AG04449 (cell line): ENCODE measurements at regions of chr7 and their contacts with region 1.

Region 1: DNA sequence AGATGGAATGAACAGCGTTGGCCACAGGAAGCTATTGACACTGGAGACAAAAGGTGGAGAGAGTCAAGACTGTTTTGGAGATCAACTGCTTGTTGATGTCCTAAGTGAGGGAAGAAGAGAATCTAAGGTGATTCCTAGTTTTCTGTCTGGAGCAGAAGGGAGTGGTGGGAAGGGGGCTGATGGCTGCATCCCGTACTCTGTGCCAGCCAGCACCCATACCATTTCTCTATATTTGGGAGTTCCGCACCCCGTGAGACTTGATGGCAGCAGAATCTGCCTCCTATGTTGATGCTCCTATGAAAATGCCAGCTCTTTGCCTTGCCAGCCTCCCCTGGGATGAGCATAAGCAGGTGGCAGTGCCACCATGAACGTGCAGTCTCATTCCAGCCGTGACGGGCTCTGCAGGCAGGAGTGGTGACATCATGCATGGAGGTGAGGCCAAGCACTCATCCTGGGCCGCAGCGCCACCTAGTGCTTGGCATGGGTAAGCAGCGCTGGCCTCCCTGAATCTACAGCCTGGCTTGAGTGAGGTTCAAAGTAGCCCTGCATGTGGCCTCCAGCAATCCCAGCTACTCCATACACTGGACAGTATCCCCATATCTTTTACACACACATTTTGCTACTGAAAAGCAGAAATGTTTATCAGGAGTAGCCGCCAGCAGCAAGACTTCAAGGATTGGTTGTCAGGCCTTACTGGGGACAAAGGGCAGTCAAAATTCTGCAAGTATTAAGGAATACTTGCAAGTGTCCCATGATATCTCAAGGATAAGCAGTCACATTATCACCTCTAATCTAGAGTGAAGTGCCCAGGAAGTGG is 43.0 kb downstream of the PODXL start:
- DNase-seq: no peak
- H3K4me3 ChIP-seq: no peak overlapping the region
- CTCF ChIP-seq: peak; percentile 99

Region 2: GRCh38 chr7:131482800-131483199 is 30.7 kb before region 1 on chr7:
- CTCF ChIA-PET with region 1: interaction called, 114 read pairs
- POLR2A ChIA-PET with region 1: no interaction called
- DNase-seq: no peak
- H3K4me3 ChIP-seq: no peak overlapping the region
- CTCF ChIP-seq: no peak

Region 3: DNA sequence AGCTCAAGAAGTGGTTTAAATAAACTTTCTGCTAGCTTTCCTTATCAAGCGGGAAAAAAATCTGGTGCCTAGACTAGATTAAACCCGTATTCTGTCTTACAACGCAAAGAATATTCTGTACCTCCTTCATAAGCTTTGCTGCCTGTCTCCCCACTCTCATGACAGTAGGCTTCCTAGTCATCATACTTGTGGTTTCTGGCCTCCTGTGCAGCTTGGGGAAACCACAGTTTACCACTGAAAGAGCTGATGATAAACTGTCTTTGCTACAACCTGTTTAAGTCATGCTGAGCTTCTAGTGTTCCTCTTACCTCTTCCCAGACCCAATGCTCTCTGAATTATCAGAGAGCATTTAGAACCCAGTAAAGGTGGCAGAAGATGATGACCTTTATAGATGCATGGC is 12.0 kb before region 1 on chr7:
- CTCF ChIA-PET with region 1: interaction called, 172 read pairs
- POLR2A ChIA-PET with region 1: no interaction called
- DNase-seq: peak; percentile 56
- H3K4me3 ChIP-seq: no peak overlapping the region
- CTCF ChIP-seq: no peak

Region 4: DNA sequence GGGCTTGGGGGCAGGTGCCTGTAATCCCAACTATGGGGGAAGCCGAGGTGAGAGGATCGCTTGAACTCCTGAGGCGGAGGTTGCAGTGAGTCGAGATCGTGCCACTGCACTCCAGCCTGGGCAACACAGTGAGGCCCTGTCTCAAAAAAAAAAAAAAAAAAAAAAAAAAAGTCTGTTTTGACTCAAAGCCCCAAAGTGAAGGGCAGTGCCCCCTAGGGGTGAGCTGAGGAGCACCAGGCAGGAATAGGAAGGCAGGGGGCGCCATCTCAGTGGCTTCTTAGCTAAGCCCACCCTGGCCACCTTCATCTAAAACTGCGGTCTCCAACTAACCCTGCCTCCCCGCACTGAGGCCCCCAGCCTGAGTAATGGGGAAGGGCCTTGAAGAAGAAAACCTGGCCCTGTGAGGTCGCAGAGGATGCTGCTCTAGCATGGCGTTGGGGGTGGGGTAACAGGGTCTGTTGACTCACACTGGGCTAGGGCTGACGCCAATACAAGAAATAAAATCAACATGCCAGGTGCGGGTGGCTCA is 33.2 kb after region 1 on chr7:
- CTCF ChIA-PET with region 1: interaction called, 34 read pairs
- POLR2A ChIA-PET with region 1: no interaction called
- DNase-seq: no peak
- H3K4me3 ChIP-seq: no peak overlapping the region
- CTCF ChIP-seq: peak; percentile 69

Region 5: GRCh38 chr7:131642429-131642828 is 129.0 kb after region 1 on chr7:
- CTCF ChIA-PET with region 1: interaction called, 136 read pairs
- POLR2A ChIA-PET with region 1: no interaction called
- DNase-seq: no peak
- H3K4me3 ChIP-seq: no peak overlapping the region
- CTCF ChIP-seq: no peak